ENCODE measurements at regions of chr1 and their contacts with region 1.

Region 1: DNA sequence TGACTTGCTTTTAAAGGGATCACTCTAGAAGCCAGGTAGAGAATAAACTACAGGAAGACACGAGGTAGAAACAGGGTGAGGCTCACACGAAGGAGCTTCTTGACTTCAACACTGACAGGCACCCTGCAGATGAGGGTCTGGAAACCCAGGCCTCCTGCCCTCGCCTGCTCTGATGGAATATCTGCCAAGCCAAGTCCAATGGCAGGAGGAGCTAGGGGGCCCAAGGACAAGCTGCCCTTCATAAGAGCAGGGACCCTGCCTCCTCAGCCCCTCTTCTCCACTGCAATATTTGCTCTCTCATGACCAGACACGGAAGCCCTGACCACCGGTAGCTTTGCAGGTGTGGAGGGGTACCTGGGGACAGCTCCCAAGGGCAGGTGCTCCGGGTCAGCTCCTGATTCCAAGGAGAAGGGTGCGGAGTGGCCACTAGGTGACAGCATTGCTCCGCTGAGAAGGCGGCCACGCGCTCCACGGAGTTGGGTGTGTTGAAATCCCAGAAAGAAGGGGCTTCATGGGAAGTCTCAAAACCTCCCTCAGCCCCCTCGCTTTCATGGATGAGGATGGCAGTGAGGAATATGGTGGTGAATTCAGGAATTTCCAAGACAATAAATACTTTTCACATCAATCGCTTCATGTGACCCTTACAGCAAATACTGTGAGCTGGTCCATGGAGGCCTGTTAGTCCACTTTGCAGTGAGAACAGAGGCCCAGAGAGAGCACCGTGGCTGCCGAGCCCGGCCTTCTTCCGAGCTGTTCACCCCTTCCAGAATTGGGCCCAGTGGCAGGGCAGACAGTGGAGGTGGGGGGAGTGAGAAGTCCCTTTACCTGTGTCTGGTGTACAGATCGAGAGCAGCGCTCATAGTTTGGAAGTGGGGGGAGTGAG is 33.2 kb upstream of the PAX7 start:
- DNase-seq: peak; percentile 75
- H3K4me3 Mint-ChIP-seq: no peak overlapping the region
- H3K27ac Mint-ChIP-seq: no peak overlapping the region
- H3K4me1 Mint-ChIP-seq: no peaks in the 10 kb centered on the region
- H3K27me3 Mint-ChIP-seq: peaks cover 13% of the 10 kb centered on the region

Region 2: GRCh38 chr1:18820791-18821641 is 223.6 kb after region 1 on chr1:
- CTCF ChIA-PET with region 1: interaction called, 10 read pairs
- intact Hi-C with region 1: loop called (anchors 1 kb)
- DNase-seq: peak; percentile 81
- H3K4me3 Mint-ChIP-seq: no peak overlapping the region
- H3K27ac Mint-ChIP-seq: no peak overlapping the region
- H3K4me1 Mint-ChIP-seq: no peaks in the 10 kb centered on the region
- H3K27me3 Mint-ChIP-seq: peaks cover 45% of the 10 kb centered on the region

Region 3: GRCh38 chr1:18869847-18870594 is 272.6 kb after region 1 on chr1:
- CTCF ChIA-PET with region 1: interaction called, 20 read pairs
- intact Hi-C with region 1: loop called (anchors 1 kb)
- DNase-seq: no peak
- H3K4me3 Mint-ChIP-seq: no peak overlapping the region
- H3K27ac Mint-ChIP-seq: no peak overlapping the region
- H3K4me1 Mint-ChIP-seq: no peaks in the 10 kb centered on the region
- H3K27me3 Mint-ChIP-seq: no peaks in the 10 kb centered on the region

Region 4: DNA sequence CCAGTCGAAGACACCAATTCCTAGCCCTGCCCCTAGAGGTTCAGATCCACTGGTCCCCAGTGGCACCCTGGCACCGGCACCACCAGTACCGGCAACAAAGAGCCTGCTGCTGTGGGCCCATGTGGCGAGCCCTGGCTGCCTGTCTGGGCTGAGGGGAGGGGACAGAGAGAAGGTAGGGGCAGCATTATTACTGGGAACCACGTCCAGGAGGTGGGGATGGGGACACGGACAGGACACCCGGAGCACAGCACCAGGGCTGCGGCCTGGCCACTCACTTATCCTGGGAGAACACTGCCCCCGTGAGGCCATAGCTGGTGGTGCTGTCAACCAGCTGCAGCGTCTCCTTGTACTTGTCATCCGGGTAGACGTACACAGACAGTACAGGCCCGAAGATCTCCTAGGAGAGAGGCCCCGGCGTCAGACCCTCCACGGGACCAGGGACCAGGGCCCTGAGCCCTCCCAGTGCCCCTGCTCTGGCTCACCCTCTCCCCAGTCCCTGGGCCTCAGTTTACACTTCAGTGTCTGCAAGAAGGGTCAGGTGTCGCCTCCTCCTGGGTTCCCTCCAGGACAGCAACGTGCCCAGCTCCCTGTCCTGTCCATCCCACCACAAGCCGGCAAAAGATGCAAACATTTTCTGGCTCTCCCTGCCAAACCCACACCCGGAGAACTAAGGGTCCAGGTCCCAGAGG is 277.9 kb after region 1 on chr1:
- CTCF ChIA-PET with region 1: interaction called, 20 read pairs
- intact Hi-C with region 1: loop called (anchors 1 kb)
- DNase-seq: peak; percentile 85
- H3K4me3 Mint-ChIP-seq: no peak overlapping the region
- H3K27ac Mint-ChIP-seq: no peak overlapping the region
- H3K4me1 Mint-ChIP-seq: no peaks in the 10 kb centered on the region
- H3K27me3 Mint-ChIP-seq: no peaks in the 10 kb centered on the region